ENCODE measurements at regions of chr19 and their contacts with region 1.

Region 1: DNA sequence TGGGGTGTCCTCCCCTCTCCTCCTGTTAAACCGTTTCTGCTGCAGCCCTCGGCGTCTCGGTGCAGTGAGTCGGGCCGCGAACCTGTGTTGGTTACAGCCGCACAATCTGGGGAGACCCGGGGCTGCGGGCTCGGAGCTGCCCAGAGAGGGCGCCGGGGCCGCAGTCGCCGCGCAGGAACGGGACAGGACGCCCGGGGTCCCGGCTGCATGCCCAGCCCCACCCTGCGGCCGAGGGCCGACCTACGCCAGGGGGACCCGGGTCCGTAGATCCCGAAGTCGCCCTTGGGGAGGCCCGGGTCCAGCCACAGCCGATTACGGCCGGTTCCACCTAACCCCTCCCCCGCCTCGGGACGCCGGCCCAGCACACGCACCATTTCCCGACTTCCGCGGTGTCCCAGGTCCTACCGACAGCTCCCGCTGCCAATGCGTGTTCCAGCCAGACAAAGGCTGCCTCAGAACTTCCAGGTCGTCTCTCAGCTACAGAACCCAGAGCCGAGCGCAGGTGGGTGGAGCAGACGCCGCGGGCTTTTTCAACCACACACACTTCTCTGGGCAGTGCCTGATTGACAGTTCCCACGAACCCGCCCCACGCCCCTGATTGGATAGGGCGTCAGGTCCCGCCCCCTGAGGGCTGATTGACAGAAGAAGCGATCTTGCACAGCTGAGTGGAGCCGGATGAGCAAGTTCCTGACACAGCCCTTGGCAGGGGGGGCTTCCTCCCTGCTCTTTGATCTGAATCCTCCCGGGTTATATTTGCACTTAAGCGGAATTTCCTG is at the start of gene ZNF443:
- DNase-seq: peak; percentile 97
- ATAC-seq: peak; percentile 97
- H3K4me3 ChIP-seq: peak within 1 kb of the TSS; percentile 57 to 91 (median 86)
- H3K4me3 Mint-ChIP-seq: peak within 1 kb of the TSS; percentile 99
- H3K27ac ChIP-seq: peak within 1 kb of the TSS; percentile 47 to 68
- H3K27ac Mint-ChIP-seq: peak within 1 kb of the TSS; percentile 92
- H3K4me1 ChIP-seq: peaks cover 3 to 10% of the 10 kb centered on the region in 2 donors
- H3K4me1 Mint-ChIP-seq: peaks cover 24% of the 10 kb centered on the region
- H3K27me3 ChIP-seq: no peaks in the 10 kb centered on the region
- H3K27me3 Mint-ChIP-seq: no peaks in the 10 kb centered on the region
- CTCF ChIP-seq: no peak
- total RNA-seq, gene ZNF443: 5.5 and 6.2 TPM in 2 replicates

Region 2: GRCh38 chr19:12294249-12295158 is 146.2 kb before region 1 on chr19 and contains the start of gene ZNF44:
- CTCF ChIA-PET with region 1: no interaction called
- POLR2A ChIA-PET with region 1: no interaction called
- intact Hi-C with region 1: loop called (anchors 1 kb)
- DNase-seq: peak; percentile 95
- ATAC-seq: peak; percentile 96
- H3K4me3 ChIP-seq: peak within 1 kb of the TSS; percentile 57 to 96 (median 91)
- H3K4me3 Mint-ChIP-seq: peak within 1 kb of the TSS; percentile 99
- H3K27ac ChIP-seq: peak within 1 kb of the TSS; percentile 82 to 89
- H3K27ac Mint-ChIP-seq: peak within 1 kb of the TSS; percentile 94
- H3K4me1 ChIP-seq: peaks cover 8 to 17% of the 10 kb centered on the region in 2 donors
- H3K4me1 Mint-ChIP-seq: peaks cover 31% of the 10 kb centered on the region
- H3K27me3 ChIP-seq: no peaks in the 10 kb centered on the region
- H3K27me3 Mint-ChIP-seq: no peaks in the 10 kb centered on the region
- CTCF ChIP-seq: no peak
- total RNA-seq, gene ZNF44: 27.8 and 28.0 TPM in 2 replicates

Region 3: DNA sequence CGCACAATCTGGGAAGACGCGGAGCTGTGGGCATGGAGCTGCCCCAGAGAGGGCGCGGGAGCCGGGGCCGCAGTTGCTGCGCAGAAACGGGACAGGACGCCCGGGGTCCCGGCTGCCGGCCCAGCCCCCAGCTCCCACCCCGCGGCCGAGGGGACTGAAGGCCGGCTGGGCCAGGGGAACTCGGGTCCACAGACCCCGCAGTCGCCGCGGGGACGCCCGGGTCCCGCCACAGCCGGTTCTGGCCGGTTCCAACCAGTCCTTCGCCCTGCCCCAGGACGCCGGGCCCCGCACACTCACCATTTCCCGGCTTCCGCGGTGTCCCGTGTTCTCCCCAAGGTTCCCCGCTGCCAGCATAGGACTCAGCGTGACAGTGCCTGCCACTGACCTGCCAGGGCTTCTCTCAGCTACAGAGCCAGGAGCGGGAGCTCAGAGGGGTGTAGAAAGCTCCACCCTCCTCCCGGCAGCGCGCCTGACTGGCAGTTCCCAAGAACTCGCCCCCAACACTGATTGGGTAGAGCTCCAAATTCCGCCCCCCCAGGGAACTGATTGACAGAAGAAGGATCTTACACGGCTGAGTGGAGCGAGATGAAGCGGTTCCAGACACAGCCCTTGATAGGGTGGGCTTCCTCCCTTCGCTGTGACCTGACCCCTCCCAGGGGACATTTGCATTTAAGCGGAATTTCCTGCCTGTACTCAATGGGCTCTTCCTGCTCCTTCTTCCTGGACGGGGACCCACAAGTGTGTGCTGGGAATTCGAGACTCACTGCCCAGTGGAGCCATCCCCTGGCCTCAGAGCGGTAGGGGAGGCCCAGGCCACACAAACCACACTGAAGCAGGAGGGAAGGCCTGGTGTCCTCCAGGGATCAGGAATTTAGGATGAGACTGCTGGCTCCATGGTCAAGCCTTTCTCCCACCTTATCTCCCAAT is 75.2 kb before region 1 on chr19 and contains the start of gene ZNF442:
- CTCF ChIA-PET with region 1: no interaction called
- POLR2A ChIA-PET with region 1: interaction called, 4 read pairs
- intact Hi-C with region 1: loop called (anchors 1 kb)
- DNase-seq: peak; percentile 86
- ATAC-seq: peak; percentile 97
- H3K4me3 ChIP-seq: peak within 1 kb of the TSS; percentile 24 to 85 (median 82)
- H3K4me3 Mint-ChIP-seq: peak within 1 kb of the TSS; percentile 98
- H3K27ac ChIP-seq: peak within 1 kb of the TSS; percentile 49 to 67
- H3K27ac Mint-ChIP-seq: peak within 1 kb of the TSS; percentile 93
- H3K4me1 ChIP-seq: peaks cover 7 to 16% of the 10 kb centered on the region in 2 donors
- H3K4me1 Mint-ChIP-seq: peaks cover 27% of the 10 kb centered on the region
- H3K27me3 ChIP-seq: no peaks in the 10 kb centered on the region
- H3K27me3 Mint-ChIP-seq: no peaks in the 10 kb centered on the region
- CTCF ChIP-seq: peak; percentile 24
- total RNA-seq, gene ZNF442: 6.9 and 8.4 TPM in 2 replicates

Region 4: DNA sequence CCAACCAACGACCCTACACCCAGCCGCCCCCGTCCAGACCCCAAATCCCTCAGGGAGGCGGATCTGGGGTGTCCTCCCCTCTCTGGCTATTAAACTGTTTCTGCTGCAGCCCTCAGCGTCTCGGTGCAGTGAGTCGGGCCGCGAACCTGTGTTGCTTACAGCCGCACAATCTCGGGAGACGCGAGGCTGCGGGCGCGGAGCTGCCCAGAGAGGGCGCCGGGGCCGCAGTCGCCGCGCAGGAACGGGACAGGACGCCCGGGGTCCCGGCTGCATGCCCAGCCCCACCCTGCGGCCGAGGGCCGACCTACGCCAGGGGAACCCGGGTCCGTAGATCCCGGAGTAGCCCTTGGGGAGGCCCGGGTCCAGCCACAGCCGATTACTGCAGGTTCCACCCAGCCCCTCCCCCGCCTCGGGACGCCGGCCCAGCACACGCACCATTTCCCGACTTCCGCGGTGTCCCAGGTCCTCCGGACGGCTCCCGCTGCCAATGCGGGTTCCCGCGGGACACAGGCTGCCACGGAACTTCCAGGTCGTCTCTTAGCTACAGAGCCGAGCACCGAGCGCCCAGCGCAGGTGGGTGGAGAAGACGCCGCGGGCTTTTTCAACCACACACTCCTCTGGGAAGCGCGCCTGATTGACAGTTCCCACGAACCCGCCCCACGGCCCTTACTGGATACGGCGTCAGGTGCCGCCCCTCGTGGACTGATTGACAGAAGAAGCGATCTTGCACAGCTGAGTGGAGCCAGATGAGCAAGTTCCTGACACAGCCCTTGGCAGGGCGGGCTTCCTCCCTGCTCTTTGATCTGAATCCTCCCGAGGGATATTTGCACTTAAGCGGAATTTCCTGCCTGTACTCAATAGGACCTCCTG is 39.9 kb before region 1 on chr19 and contains the start of gene ZNF799:
- CTCF ChIA-PET with region 1: no interaction called
- POLR2A ChIA-PET with region 1: no interaction called
- intact Hi-C with region 1: loop called (anchors 2 kb)
- DNase-seq: peak; percentile 89
- ATAC-seq: peak; percentile 91
- H3K4me3 ChIP-seq: peak within 1 kb of the TSS; percentile 61 to 93 (median 90)
- H3K4me3 Mint-ChIP-seq: peak within 1 kb of the TSS; percentile 91
- H3K27ac ChIP-seq: peak within 1 kb of the TSS in 1 of 2 donors; percentile 68
- H3K27ac Mint-ChIP-seq: peak within 1 kb of the TSS; percentile 85
- H3K4me1 ChIP-seq: peaks cover 4 to 7% of the 10 kb centered on the region in 2 donors
- H3K4me1 Mint-ChIP-seq: peaks cover 20% of the 10 kb centered on the region
- H3K27me3 ChIP-seq: no peaks in the 10 kb centered on the region
- H3K27me3 Mint-ChIP-seq: no peaks in the 10 kb centered on the region
- CTCF ChIP-seq: no peak
- total RNA-seq, gene ZNF799: 10.5 and 11.1 TPM in 2 replicates

Region 5: DNA sequence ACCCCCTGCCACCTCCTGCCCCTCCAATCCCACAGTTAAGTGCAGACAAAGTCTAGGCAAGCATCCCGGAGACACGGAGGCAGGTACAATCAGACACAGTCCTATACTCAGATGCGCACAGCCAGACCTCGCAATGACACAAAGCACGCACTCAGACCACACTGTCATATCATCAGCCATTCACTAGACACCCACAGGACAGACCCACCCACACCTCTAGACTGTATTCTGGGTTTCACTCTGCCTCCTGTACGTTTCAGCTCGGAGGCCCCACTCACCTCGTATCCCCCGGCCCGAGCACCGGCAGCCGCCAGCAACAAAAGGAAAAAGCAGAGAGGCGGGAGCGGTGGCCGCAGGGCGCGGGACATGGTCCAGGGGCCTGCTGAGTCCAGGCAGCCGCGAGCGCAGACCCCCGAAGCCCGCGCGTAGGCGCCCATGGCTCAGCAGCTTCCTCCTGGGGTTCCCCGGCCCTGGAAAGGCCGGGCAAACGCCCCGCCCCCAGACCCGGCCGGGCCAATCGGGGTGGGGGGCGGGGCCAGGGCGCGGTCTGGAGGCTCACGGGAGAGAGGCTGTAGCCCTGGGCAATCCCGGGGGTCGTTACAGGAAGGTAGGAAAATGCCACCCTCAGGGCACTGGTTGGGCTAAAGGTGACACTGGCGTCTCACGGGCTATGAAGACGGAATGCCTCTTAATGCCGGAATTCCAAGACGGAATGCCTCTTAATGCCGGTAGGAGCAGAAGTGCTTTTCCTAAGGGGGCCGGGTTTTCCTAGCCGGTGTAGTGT is 225.7 kb after region 1 on chr19 and contains the starts of genes MAN2B1 and WDR83:
- CTCF ChIA-PET with region 1: no interaction called
- POLR2A ChIA-PET with region 1: no interaction called
- intact Hi-C with region 1: loop called (anchors 5 kb)
- DNase-seq: peak; percentile 91
- ATAC-seq: peak; percentile 71
- H3K4me3 ChIP-seq: peak within 1 kb of the TSS; percentile 84 to 99 (median 94)
- H3K4me3 Mint-ChIP-seq: peak within 1 kb of the TSS; percentile 98
- H3K27ac ChIP-seq: peak within 1 kb of the TSS; percentile 95 to 99
- H3K27ac Mint-ChIP-seq: peak within 1 kb of the TSS; percentile 97
- H3K4me1 ChIP-seq: peaks cover 37 to 60% of the 10 kb centered on the region in 2 donors
- H3K4me1 Mint-ChIP-seq: peaks cover 67% of the 10 kb centered on the region
- H3K27me3 ChIP-seq: no peaks in the 10 kb centered on the region
- H3K27me3 Mint-ChIP-seq: no peaks in the 10 kb centered on the region
- CTCF ChIP-seq: no peak
- total RNA-seq, gene MAN2B1: 252 and 256 TPM in 2 replicates
- total RNA-seq, gene WDR83: 24.6 and 25.8 TPM in 2 replicates

Measured in B cell (primary cell).